K562 (cell line): ENCODE measurements at regions of chr10 and their contacts with region 1.

Region 1: DNA sequence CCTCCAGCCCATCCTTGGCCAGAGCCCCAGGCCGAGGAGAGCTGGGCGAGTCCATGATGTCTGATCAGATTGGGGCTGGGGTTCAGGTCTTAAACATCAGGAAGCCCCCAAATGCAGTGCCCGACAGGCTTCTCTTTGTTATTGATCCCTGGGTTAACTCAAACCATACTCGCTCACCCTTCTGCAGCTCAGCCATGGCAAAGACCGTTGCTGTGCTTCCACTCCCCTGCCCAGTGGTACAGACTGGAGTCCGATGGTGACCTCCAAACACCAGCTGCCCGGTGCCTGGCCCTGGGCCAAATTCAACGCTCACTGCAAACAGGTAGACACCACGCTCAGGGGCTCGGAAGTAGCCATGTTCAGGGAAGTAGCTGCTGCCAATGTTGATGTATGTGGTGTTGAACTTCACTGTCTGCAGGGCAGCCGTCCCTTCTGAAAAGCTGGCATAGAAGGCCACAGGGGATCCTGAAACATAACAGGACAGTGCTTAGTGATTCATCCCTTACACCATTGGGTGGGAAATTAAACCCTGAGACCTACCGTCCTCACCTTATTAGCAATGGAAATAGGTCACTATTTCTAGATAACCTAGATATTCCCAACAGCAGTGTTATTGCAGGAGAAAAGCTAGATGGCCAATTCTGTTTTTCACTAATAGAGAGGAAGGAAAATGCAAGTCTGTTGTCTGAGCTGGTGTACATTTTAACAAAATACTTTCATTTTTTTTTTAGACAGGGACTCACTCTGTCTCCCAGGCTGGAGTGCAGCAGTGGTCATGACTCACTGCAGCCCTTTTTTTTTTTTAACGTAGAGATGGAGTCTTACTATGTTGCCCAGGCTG is 20.5 kb downstream of the MMRN2 start:
- DNase-seq: no peak
- ATAC-seq: no peak
- H3K4me3 ChIP-seq: no peak overlapping the region
- H3K27ac ChIP-seq: no peak overlapping the region
- H3K4me1 ChIP-seq: peaks cover 0 to 4% of the 10 kb centered on the region in 2 experiments; a peak in 1 of 5 replicates
- H3K27me3 ChIP-seq: no peaks in the 10 kb centered on the region
- CTCF ChIP-seq: no peak
- EP300 ChIP-seq: no peak
- POLR2A ChIP-seq: no peak
- RAD21 ChIP-seq: no peak

Region 2: GRCh38 chr10:86960003-86960862 is 23.4 kb after region 1 on chr10:
- CTCF ChIA-PET with region 1: interaction called, 28 read pairs
- POLR2A ChIA-PET with region 1: interaction called, 3 read pairs
- in situ Hi-C with region 1: no loop called
- intact Hi-C with region 1: loop called (anchors 1 kb)
- DNase-seq: peak; percentile 85 to 92 (median 87)
- ATAC-seq: peak; percentile 80
- H3K4me3 ChIP-seq: peak overlapping the region; percentile 49
- H3K27ac ChIP-seq: peak overlapping the region; percentile 91
- H3K4me1 ChIP-seq: peaks cover 53 to 84% of the 10 kb centered on the region in 2 experiments
- H3K27me3 ChIP-seq: no peaks in the 10 kb centered on the region
- CTCF ChIP-seq: peak; percentile 97 to 98 (median 97)
- EP300 ChIP-seq: 0 out of 2 replicates have a peak, but pooled peaks have one; percentile 5
- POLR2A ChIP-seq: peak; percentile 44; the same call in 1 of the 2 replicates
- RAD21 ChIP-seq: peak; percentile 87 to 97

Region 3: DNA sequence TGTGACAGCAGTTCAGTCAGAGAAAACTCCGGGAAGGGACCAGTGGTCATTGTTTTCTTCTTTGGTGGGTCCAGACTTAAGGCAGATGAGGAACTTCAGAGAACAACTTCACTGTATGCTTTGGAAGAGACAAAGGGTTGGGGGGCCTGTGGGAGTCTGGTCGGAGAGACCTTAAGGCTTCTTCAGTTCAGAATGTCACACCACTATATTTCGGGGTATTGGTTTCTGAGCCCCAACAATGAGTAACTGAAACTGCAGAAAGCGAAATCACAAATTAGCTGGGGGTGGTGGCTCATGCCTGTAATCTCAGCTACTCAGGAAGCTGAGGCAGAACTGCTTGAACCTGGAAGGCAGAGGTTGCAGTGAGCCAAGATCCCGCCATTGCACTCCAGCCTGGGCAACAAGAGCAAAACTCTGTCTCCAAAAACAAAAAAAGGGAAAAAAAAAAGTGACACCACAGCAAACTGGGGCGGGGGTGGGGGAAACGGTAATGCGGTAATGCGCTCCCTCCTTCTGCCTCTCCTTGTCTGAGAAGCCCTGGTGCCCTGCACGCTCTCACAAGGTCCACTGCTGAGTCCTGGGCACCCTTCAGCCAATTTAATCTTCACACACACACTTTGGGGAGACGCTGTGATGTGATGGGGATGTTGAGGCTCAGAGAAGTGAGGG is 29.2 kb after region 1 on chr10:
- CTCF ChIA-PET with region 1: interaction called, 28 read pairs
- POLR2A ChIA-PET with region 1: no interaction called
- in situ Hi-C with region 1: no loop called
- intact Hi-C with region 1: no loop called
- DNase-seq: no peak
- ATAC-seq: peak; percentile 32; the same call in 2 of the 3 replicates
- H3K4me3 ChIP-seq: no peak overlapping the region
- H3K27ac ChIP-seq: peak overlapping the region; percentile 53; the same call in 1 of the 3 replicates
- H3K4me1 ChIP-seq: peaks cover 10 to 44% of the 10 kb centered on the region in 2 experiments; a peak in 4 of 5 replicates
- H3K27me3 ChIP-seq: no peaks in the 10 kb centered on the region
- CTCF ChIP-seq: no peak
- EP300 ChIP-seq: no peak
- POLR2A ChIP-seq: no peak
- RAD21 ChIP-seq: no peak

Region 4: DNA sequence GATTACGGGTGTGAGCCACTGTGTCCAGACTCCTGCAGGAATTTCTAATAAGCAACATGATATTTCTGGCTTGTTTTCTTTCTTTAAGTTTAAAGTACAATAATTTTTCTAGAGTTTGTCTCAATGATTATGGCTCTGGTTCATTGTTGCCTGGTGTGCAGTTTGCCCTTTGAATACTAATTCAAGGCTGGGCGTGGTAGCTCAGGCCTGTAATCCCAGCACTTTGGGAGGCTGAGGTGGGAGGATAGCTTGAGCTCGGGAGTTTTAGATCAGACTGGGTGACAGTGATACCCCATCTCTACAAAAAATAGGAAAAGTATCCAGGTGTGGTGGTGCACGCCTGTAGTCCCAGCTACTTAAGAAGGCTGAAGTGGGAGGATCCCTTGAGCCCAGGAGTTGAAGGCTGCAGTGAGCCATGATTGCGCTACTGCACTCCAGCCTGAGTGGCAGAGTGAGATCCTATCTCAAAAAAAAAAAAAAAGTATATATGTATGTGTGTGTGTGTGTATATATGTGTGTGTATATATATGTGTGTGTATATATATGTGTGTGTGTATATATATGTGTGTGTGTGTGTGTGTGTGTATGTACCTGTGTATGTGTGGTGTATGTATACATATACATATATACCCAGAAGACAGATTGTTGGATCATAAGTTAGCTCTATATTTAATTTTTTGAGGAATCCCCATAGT is 39.6 kb after region 1 on chr10:
- CTCF ChIA-PET with region 1: no interaction called
- POLR2A ChIA-PET with region 1: no interaction called
- in situ Hi-C with region 1: no loop called
- intact Hi-C with region 1: no loop called
- DNase-seq: no peak
- ATAC-seq: no peak
- H3K4me3 ChIP-seq: no peak overlapping the region
- H3K27ac ChIP-seq: no peak overlapping the region
- H3K4me1 ChIP-seq: peaks cover 6 to 10% of the 10 kb centered on the region in 2 experiments; a peak in 2 of 5 replicates
- H3K27me3 ChIP-seq: no peaks in the 10 kb centered on the region
- CTCF ChIP-seq: no peak
- EP300 ChIP-seq: no peak
- POLR2A ChIP-seq: no peak
- RAD21 ChIP-seq: no peak

Region 5: GRCh38 chr10:87079106-87079836 is 142.4 kb after region 1 on chr10:
- CTCF ChIA-PET with region 1: no interaction called
- POLR2A ChIA-PET with region 1: no interaction called
- in situ Hi-C with region 1: no loop called
- intact Hi-C with region 1: no loop called
- DNase-seq: no peak
- ATAC-seq: no peak
- H3K4me3 ChIP-seq: no peak overlapping the region
- H3K27ac ChIP-seq: no peak overlapping the region
- H3K4me1 ChIP-seq: no peaks in the 10 kb centered on the region
- H3K27me3 ChIP-seq: no peaks in the 10 kb centered on the region
- CTCF ChIP-seq: no peak
- EP300 ChIP-seq: no peak
- POLR2A ChIP-seq: no peak
- RAD21 ChIP-seq: no peak